ENCODE measurements at regions of chr6 and their contacts with region 1.

Region 1: DNA sequence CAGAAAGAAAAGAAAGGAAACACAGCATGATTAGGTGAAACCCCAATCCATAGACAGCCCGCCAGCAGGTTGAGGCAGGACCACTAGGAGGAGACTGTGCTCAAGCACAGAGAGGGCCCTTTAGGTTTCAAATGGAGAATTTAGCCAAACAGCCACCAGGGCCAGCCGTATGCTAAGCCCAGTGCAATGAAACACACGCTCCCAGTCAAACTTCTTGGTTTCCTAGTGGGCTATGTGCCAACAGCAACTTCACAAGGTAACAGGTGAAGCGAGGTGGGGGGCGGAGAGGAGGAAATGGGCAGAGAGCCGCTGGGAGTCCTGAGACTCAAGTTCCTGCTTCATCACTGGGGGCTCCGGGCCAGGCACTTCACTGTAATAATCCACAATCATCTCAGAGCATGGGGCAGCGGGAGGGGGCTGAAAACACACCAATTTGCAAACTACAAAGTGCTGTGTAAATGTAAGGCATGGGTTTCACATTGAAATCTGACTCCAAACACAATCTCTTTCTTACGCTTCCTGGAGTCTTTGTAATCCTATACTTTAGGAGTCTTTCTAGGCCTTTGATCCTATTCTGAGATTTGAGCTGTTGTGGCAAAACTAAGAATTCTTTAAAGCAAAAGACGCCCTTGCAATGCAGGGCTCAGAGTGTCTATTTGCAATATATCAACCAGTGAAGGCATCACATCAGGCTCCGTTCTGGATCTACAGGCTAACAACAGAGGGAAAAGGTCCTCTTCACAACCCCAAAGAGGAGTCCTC is 117.3 kb downstream of the OPRM1 start:
- ATAC-seq: peak in 4 of 8 experiments; percentile 56 to 97 (median 67)
- H3K4me3 ChIP-seq: no peak overlapping the region
- H3K27ac ChIP-seq: no peak overlapping the region
- H3K4me1 ChIP-seq: no peaks in the 10 kb centered on the region

Region 2: DNA sequence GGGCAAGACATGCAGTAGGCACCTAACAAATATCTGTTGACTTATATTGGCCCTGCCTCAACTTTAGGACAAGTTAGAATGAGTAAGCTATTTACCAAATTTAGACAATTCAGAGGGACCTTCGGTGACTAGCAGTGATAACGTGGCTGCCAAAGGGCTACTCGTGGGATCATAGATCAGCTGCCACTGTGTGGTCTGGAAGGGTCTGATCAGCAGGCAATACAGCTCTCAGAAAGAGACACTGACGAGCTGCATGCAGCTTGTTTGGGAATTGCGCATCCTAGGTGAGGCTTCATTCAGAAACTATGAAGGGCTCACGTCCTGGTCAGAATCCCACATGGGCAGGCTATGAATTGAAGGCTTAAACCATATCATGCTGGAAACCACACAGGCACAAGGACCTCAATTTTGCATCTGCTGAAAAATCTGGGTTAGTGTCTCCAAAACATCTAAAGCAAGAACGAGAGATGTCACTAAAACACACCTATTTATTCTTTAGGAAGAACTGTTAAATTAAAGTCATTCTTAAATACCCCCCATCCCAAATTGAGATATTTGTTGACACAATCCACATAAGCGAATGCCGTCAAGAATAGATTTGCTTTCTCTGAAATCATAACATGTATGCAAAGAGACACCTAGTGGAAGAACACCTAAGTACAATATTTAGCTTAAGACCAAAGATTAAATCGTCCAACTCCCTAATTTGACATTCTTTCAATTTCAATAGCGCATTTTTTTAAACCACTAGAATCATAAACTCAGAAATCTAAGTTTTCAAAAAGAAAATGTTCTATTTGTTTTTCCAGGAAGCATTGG is 120.7 kb after region 1 on chr6:
- in situ Hi-C with region 1: loop called in 2 of 9 experiments (anchors 10 to 25 kb)
- ATAC-seq: peak in 4 of 8 experiments; percentile 24 to 67 (median 42)
- H3K4me3 ChIP-seq: no peak overlapping the region
- H3K27ac ChIP-seq: no peak overlapping the region
- H3K4me1 ChIP-seq: peaks cover 3 to 9% of the 10 kb centered on the region in 2 donors

Region 3: GRCh38 chr6:154370545-154370944 is 214.2 kb after region 1 on chr6:
- in situ Hi-C with region 1: loop called in 2 of 9 experiments (anchors 10 to 25 kb)
- ATAC-seq: peak in 7 of 8 experiments; percentile 29 to 79 (median 61)
- H3K4me3 ChIP-seq: no peak overlapping the region
- H3K27ac ChIP-seq: no peak overlapping the region
- H3K4me1 ChIP-seq: peaks cover 0 to 7% of the 10 kb centered on the region in 2 donors

Region 4: GRCh38 chr6:154615483-154616025 is 459.2 kb after region 1 on chr6:
- in situ Hi-C with region 1: loop called in 1 of 9 experiments (anchors 25 kb)
- ATAC-seq: peak in 5 of 8 experiments; percentile 33 to 80 (median 66)
- H3K4me3 ChIP-seq: no peak overlapping the region
- H3K27ac ChIP-seq: no peak overlapping the region
- H3K4me1 ChIP-seq: no peaks in the 10 kb centered on the region

Region 5: DNA sequence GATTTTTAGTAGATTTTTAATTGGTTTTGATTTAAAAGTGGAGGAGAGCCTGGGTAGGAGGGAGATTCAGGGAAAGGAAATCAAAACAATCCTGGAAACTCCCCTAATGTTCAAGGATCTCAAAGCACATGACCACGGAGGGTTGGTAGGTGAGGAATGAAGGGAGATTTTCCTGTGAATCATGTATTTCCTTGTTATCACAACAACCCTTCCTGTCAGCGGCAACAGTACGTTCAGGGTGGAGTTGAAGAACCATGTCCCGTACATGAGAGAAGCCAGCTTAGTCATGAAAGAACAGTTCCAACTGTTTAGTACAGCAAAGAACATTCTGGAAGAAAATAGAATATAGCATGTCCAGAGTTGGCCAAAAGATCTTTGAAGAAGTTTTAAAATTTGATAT is 497.5 kb after region 1 on chr6:
- in situ Hi-C with region 1: loop called in 1 of 9 experiments (anchors 25 kb)
- ATAC-seq: peak in 3 of 8 experiments; percentile 62 to 99 (median 99)
- H3K4me3 ChIP-seq: no peak overlapping the region
- H3K27ac ChIP-seq: no peak overlapping the region
- H3K4me1 ChIP-seq: no peaks in the 10 kb centered on the region